ENCODE measurements at regions of chr9 and their contacts with region 1.

Region 1: DNA sequence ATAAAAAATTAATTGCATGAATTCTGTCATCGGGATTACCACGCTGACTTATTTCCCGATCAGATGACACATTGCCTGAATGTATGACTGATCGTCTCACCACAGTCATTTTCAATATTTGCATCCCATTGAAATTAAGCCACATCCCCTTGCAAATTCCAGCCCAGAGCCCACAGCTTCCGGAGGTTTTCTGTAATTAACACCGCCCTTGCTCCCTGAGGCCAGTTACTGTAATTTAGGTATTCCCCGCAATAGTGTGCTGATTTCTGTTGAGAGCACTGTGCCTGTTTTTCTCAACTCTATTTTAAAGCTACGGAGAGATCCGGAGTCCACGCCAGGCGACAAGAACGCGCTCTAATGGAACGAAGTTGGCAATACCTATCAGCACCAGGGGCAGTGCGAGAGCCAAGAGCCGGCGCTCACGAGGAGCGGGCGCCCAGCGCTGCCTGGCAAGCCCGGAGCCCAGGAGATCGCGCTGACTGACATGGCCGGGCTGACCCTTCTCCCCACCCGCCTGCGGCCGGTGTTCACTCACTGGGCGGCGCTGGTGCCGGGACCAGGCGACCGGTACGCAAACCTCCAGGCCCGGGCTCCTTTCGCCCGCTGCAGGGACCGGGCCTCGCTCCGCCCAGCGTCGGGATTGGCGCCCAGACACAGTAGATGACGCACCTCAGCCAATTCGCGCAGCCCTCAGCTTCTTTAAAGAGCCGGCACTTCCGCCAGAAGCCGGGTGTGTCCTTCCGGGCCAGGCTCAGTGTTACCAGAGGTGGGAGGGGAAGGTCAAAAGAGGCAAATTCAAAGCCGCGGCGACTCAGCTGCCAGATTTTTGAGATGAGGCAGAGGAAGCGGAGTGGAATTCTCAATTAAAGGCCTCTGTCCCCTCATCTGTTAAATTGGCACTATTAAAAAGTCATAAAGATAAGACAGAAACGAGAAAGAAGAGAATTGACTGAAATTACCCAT is at the start of gene PLGRKT:
- DNase-seq: peak; percentile 95
- H3K4me3 Mint-ChIP-seq: peak within 1 kb of the TSS; percentile 94
- H3K27ac Mint-ChIP-seq: peak within 1 kb of the TSS; percentile 97
- H3K4me1 Mint-ChIP-seq: peaks cover 38% of the 10 kb centered on the region
- H3K27me3 Mint-ChIP-seq: no peaks in the 10 kb centered on the region

Region 2: GRCh38 chr9:5450359-5451091 is 13.0 kb after region 1 on chr9 and contains the start of gene CD274:
- CTCF ChIA-PET with region 1: interaction called, 37 read pairs
- DNase-seq: peak; percentile 86
- H3K4me3 Mint-ChIP-seq: peak within 1 kb of the TSS; percentile 89
- H3K27ac Mint-ChIP-seq: peak within 1 kb of the TSS; percentile 90
- H3K4me1 Mint-ChIP-seq: peaks cover 81% of the 10 kb centered on the region
- H3K27me3 Mint-ChIP-seq: no peaks in the 10 kb centered on the region

Region 3: DNA sequence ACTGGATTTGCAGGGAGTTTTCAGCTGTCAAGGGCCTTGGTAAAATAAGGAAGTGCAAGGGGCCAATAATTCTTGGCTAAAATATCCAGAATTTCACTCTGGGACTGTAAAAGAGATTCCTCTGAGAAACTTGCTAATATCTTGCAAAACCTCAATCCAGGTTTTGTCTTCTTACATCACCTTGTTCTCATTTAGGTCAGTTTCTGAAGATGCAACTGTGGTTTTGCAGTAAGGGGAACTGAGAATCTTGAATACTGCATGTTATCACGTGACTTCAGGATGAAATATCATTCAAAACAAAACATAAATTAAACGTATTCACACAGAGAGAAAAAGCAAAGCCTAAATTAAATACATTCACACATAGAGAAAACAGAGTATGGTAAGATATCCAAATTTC is 156.4 kb after region 1 on chr9:
- CTCF ChIA-PET with region 1: interaction called, 25 read pairs
- DNase-seq: no peak
- H3K4me3 Mint-ChIP-seq: no peak overlapping the region
- H3K27ac Mint-ChIP-seq: no peak overlapping the region
- H3K4me1 Mint-ChIP-seq: peaks cover 11% of the 10 kb centered on the region
- H3K27me3 Mint-ChIP-seq: no peaks in the 10 kb centered on the region

Region 4: GRCh38 chr9:5617749-5618148 is 180.2 kb after region 1 on chr9:
- CTCF ChIA-PET with region 1: no interaction called
- DNase-seq: no peak
- H3K4me3 Mint-ChIP-seq: no peak overlapping the region
- H3K27ac Mint-ChIP-seq: peak overlapping the region; percentile 46
- H3K4me1 Mint-ChIP-seq: peaks cover 24% of the 10 kb centered on the region
- H3K27me3 Mint-ChIP-seq: no peaks in the 10 kb centered on the region

Measured in activated naive CD4-positive, alpha-beta T cell treated with anti-CD3 and anti-CD28 coated beads, Interleukin-2, amount 10 ng/mL, durations not matched to agents 7 days and 5 days (primary cell).